ENCODE measurements at regions of chr1 and their contacts with region 1.

Region 1: DNA sequence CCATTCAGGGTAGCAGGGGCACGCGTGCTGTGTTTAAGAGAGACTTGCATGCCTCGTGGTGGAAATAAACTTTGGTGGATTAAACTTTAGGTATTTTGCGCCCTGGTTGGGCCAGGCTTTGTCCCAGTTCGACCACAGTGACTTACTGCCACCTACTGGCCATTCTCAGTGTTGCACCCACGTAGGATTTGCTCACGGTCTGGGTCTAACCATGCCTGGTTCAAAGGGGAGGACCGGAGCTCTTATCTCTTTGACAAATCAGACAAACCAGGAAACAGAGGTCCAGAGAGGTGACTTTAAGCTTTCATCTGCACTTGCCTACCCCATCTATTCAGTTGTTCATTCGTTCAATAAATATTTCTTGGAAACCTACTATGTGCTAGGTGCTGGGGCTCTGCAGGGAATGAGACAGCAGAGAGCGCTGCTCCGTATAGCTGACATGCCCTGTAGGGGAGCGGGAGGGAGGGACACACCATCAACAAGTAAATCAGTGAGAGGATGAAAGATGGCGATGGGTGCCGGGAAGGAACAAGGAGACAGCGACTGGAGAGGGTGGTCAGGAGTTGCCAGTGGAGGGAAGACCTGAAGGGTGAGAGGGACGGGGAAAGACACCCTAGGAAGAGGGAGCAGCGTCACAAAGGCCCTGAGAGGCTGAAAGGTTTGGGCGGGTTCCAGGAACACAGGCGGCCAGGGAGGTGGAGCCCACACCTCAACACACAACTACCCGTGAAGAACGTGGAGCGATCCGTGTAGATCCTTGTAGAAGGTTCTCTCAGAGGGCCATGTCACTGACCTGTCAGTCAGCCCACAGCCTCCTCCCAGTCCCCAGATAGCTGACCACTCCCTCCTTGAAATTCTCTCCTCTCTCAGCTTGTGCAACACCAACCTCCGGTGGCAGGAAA is 27.2 kb upstream of the TINAGL1 start:
- DNase-seq: peak; percentile 63 to 96 (median 88)

Region 2: GRCh38 chr1:31387612-31388011 is 161.5 kb before region 1 on chr1:
- intact Hi-C with region 1: loop called (anchors 5 kb)
- DNase-seq: peak in 1 of 10 donors; percentile 22

Region 3: GRCh38 chr1:31460027-31460426 is 89.1 kb before region 1 on chr1:
- intact Hi-C with region 1: loop called (anchors 2 kb)
- DNase-seq: no peak

Region 4: DNA sequence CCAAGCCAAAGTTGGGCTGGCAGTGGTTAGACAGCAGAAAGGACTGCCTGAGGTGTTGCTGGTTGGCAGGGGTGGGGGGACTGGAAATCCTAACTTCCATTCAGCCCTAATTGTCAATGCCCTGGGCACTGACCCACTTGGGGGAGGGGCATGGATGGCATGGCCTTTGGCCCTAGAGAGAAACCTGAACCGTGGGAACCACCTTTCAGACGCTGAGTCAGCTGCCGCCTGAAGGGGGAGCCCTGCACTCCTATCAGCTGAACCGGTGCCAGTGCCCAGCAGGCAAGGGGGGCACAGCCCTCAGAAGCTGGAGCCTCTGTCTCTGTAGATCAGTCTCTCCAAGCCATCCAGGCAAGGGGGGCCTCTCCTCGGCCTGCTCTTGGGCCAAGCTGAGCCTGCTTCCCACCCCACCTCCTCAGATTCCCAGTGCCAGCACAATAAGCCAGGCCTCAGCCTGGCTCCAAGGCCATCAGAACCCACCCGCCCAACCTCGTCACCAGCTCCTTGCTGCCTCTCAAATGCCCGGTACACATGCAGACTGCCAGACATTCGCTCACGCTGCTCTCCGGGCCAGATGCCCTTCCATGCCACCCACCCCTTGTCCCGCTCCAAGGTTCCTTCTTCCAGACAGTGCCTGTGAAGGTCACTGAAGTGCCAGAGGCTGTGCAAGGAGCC is 38.7 kb after region 1 on chr1:
- intact Hi-C with region 1: no loop called
- DNase-seq: peak in 6 of 10 donors; percentile 30 to 83 (median 40)

Region 5: DNA sequence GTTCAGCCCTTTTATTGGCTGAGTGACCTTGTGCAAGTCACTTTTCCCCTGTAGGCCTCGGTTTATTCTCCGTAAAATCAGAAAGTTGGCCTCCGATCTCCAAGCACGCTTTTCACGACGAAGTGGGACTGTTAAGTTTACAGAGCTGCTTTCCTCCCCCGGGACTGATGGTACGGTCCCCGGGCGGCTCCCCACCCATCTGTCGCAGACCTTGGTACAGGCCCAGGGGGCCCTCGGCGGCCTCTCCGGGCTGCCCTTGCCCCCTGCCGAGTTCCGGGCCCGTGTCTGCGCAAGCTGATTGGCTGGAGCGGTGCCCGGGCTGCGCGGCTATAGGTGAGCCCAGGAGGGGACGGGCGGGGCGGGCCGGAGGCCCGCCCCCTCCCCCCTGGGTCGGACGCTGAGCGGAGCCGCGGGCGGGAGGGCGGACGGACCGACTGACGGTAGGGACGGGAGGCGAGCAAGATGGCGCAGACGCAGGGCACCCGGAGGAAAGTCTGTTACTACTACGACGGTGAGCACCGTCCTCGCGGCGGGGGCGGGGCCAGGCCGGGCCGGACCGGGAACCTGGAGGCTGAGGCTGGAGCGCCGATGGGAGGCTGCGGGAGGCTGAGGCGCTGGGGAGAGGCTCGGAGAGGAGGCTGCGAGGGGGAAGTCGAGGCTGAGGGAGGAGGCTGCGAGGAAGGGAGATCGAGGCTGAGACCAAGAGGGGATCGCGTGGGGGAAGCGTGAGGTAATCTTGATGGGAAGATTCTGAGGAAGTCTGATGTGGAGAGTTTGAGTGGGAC is 742.7 kb after region 1 on chr1 and contains the start of gene HDAC1:
- intact Hi-C with region 1: loop called (anchors 10 kb)
- DNase-seq: peak; percentile 78 to 97 (median 82)

Measured in posterior cingulate gyrus (tissue), 11 donors.